HCT116 (cell line): ENCODE measurements at regions of chr3 and their contacts with region 1.

Region 1: DNA sequence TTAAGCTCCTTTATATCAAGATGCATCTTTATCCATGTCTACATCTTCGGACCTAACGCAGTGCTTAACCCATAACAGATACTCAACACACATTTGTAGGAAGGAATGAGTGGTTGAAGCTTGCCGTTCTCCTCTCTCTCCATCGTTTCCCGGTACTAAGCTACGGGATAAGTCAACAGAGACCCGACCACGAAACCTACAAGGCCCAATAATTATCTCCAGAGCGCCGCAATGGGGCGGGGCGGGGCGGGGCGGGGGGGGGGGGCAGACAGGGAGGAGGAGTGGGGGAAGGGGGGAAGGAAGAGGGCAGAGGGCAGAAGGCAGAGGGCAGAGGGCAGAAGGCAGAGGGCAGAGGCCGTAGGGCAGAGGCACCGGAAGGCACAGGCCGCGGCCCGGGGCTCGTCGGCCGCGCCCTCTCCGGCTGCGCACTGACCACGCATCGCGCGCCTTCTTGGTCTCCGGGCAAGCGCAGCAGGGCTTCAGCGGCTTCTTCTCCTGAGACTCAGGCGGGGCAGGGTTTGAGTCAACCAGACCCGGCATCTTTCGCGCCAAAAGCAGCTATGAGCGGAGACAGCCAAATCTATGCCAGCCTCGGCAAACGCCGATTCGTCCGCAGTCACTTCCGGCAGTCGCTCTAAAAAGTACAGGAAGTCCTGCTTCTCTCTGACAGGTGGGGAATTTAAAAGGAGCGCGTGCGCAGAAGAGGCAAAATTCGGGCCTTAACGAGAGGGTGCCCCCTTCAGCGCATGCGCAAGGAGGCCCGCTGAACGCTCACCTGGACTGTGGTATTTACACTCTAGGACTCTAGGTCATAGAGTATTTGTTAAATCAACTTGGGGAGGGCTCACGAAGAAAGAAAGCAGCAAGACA is at the start of gene COX17:
- DNase-seq: peak; percentile 96
- ATAC-seq: peak; percentile 86
- H3K4me3 ChIP-seq: peak within 1 kb of the TSS; percentile 74 to 87
- H3K27ac ChIP-seq: peak within 1 kb of the TSS; percentile 70
- H3K4me1 ChIP-seq: peaks cover 3 to 14% of the 10 kb centered on the region in 2 experiments; a peak in 3 of 4 replicates
- H3K27me3 ChIP-seq: no peaks in the 10 kb centered on the region
- CTCF ChIP-seq: no peak
- POLR2A ChIP-seq: peak; percentile 78
- RAD21 ChIP-seq: no peak
- total RNA-seq, gene COX17: 51.6 TPM

Region 2: DNA sequence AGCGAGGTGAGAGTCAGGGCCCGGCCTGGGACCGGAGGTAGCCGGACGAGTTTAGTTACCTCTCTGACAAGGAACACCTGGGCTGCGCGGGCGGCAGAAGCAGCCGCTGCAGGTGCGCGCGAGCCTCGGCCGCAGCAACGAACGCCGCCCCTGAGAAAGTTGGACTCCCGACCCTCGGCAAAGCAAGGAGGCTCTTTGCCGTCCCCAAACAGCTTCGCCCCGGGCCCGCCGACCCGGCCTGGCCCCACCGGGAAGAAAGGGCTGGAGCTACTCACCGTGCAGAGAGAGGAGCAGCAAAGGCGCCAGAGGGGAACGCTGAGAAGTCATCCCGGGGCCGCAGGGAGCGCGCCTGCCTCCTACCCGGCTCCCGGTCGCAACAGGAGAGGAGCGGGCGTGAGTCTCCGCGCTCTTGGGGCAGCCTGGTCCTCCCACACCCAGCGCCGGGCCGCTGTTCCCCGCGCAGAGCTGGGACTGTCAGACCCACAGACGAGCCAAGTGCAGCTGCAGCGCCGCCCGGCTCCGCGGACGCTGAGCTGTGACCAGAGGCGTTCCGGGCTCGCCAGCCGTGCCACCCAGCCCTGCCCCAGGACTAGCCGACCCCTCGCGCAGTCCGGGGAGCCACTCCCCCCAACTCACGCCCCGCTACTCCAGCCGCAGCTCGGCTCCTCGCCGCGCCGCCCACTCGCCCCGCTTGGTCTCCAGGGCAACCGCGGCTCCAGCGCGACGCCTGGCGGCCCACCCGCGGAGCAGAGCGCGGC is 642.6 kb before region 1 on chr3 and contains the start of gene IGSF11:
- CTCF ChIA-PET with region 1: no interaction called
- POLR2A ChIA-PET with region 1: no interaction called
- RAD21 ChIA-PET with region 1: no interaction called
- intact Hi-C with region 1: loop called (anchors 10 kb)
- DNase-seq: no peak
- ATAC-seq: peak; percentile 93
- H3K4me3 ChIP-seq: peak within 1 kb of the TSS; percentile 21 to 36
- H3K27ac ChIP-seq: no peak within 1 kb of the TSS
- H3K4me1 ChIP-seq: peaks cover 0 to 12% of the 10 kb centered on the region in 2 experiments; a peak in 2 of 4 replicates
- H3K27me3 ChIP-seq: peaks cover 64% of the 10 kb centered on the region
- CTCF ChIP-seq: peak; percentile 15 to 37 (median 21); a peak in 3 of 6 replicates
- POLR2A ChIP-seq: no peak
- RAD21 ChIP-seq: peak; percentile 24; the same call in 1 of the 2 replicates
- total RNA-seq, gene IGSF11: not detected

Region 3: DNA sequence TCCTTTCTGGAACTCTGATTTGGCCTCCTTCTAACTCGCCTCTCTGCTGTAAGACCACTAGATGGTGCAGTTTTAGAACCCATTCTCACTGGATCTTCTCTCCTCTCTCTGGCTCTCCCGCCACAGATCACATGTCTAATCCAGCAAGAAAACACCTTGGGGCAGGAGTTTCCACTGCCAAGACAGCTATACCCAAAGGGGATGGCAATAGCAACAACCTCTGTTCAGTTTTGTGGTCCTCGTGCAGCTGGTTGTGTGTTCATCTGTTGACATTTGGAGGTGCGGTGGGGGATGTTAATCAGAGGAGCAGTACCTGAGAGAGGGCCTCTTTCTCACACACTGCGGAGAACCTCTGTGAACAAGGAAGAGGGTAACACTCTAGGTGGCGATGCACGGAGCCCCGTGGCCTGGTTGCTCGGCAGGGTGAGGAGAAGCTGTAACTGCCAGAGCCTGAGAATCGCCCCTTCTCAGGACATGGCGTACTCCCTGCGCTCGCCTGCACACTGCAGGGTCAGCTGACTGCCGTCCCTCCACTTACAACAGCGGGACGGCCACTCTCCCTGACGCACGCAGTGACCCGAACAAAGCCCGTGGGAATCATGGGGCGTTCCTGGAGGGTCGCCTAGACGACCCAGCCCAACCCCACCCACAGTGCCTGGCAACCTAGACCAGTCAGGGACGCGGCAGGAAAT is 531.4 kb before region 1 on chr3 and contains the start of gene TEX55:
- CTCF ChIA-PET with region 1: no interaction called
- POLR2A ChIA-PET with region 1: no interaction called
- RAD21 ChIA-PET with region 1: no interaction called
- intact Hi-C with region 1: loop called (anchors 1 kb)
- DNase-seq: peak; percentile 10
- ATAC-seq: peak; percentile 98
- H3K4me3 ChIP-seq: no peak within 1 kb of the TSS
- H3K27ac ChIP-seq: no peak within 1 kb of the TSS
- H3K4me1 ChIP-seq: no peaks in the 10 kb centered on the region
- H3K27me3 ChIP-seq: no peaks in the 10 kb centered on the region
- CTCF ChIP-seq: peak; percentile 38 to 71 (median 68); a peak in 5 of 6 replicates
- POLR2A ChIP-seq: no peak
- RAD21 ChIP-seq: peak; percentile 53; the same call in 1 of the 2 replicates
- total RNA-seq, gene TEX55: not detected

Region 4: GRCh38 chr3:119463171-119464169 is 213.5 kb before region 1 on chr3 and contains the start of gene TMEM39A:
- CTCF ChIA-PET with region 1: no interaction called
- POLR2A ChIA-PET with region 1: interaction called, 3 read pairs
- RAD21 ChIA-PET with region 1: no interaction called
- intact Hi-C with region 1: loop called (anchors 10 kb)
- DNase-seq: peak; percentile 95
- ATAC-seq: peak; percentile 95
- H3K4me3 ChIP-seq: peak within 1 kb of the TSS; percentile 91 to 99
- H3K27ac ChIP-seq: peak within 1 kb of the TSS; percentile 56
- H3K4me1 ChIP-seq: peaks cover 13 to 23% of the 10 kb centered on the region in 2 experiments
- H3K27me3 ChIP-seq: no peaks in the 10 kb centered on the region
- CTCF ChIP-seq: 0 out of 6 replicates have a peak, but pooled peaks of 1 of the 3 experiments have one; percentile 4
- POLR2A ChIP-seq: peak; percentile 98
- RAD21 ChIP-seq: no peak
- total RNA-seq, gene TMEM39A: 40.2 TPM

Region 5: GRCh38 chr3:119550192-119550910 is 126.7 kb before region 1 on chr3:
- CTCF ChIA-PET with region 1: no interaction called
- POLR2A ChIA-PET with region 1: no interaction called
- RAD21 ChIA-PET with region 1: no interaction called
- intact Hi-C with region 1: no loop called
- DNase-seq: no peak
- ATAC-seq: no peak
- H3K4me3 ChIP-seq: no peak overlapping the region
- H3K27ac ChIP-seq: no peak overlapping the region
- H3K4me1 ChIP-seq: no peaks in the 10 kb centered on the region
- H3K27me3 ChIP-seq: no peaks in the 10 kb centered on the region
- CTCF ChIP-seq: no peak
- POLR2A ChIP-seq: no peak
- RAD21 ChIP-seq: no peak

Region 6: DNA sequence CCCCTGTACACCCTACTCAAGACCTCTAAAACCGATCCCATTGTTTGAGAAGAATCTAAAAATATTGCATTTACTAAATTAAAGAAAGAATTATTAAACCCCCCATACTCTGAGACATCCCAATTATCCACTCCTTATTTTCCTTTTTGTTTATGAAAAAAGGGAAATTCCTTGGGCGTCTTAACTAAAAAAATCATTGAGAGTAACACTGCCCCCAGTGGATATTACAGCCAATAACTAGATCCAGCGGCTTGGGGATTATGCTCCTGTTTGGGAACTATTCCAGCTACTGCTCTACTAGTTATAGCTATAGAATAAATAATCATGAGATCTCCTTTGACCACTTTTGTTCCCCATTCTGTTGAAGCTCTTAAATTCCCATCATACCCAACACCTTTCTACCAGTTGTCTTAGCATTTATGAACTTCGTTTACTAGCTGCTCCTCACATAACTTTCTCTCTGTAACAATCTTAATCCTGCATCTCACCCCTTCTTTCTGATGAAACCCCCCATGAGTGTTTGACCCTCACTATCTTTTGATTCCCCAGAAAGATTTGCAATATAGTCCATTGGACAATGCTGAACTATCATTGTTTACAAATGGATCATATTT is 13.1 kb after region 1 on chr3:
- CTCF ChIA-PET with region 1: interaction called, 10 read pairs
- POLR2A ChIA-PET with region 1: no interaction called
- RAD21 ChIA-PET with region 1: no interaction called
- intact Hi-C with region 1: no loop called
- DNase-seq: no peak
- ATAC-seq: peak; percentile 82
- H3K4me3 ChIP-seq: no peak overlapping the region
- H3K27ac ChIP-seq: no peak overlapping the region
- H3K4me1 ChIP-seq: no peaks in the 10 kb centered on the region
- H3K27me3 ChIP-seq: no peaks in the 10 kb centered on the region
- CTCF ChIP-seq: peak; percentile 24 to 65 (median 58); a peak in 5 of 6 replicates
- POLR2A ChIP-seq: no peak
- RAD21 ChIP-seq: no peak